ENCODE measurements at regions of chr1 and their contacts with region 1.

Region 1: DNA sequence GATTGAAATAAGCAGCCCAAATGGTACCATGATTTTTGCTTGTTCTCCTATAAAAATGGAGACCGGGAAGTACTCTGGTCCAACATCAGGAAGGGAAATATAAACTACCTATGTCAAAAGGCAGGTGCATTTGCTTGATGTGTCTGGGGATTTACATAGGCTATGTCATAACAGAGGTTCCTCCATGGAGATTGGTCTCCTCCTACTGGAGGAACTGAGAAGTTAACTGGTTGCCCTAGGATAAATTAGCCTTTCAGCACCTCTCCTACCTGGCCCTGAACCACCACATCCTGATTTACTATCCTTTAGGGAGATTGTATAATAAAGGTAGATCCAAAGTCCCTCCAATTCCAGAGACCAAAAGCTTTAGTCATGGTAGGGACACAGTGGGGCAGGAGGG is 1109.3 kb upstream of the B3GALT2 start:
- DNase-seq: peak; percentile 27
- ATAC-seq: peak; percentile 76
- H3K4me3 Mint-ChIP-seq: no peak overlapping the region
- H3K27ac Mint-ChIP-seq: peak overlapping the region; percentile 53
- H3K4me1 Mint-ChIP-seq: peaks cover 44% of the 10 kb centered on the region
- H3K27me3 Mint-ChIP-seq: no peaks in the 10 kb centered on the region

Region 2: GRCh38 chr1:192477630-192478029 is 1818.1 kb before region 1 on chr1:
- CTCF ChIA-PET with region 1: no interaction called
- POLR2A ChIA-PET with region 1: no interaction called
- intact Hi-C with region 1: loop called in 1 of 2 experiments (anchors 5 kb)
- DNase-seq: no peak
- ATAC-seq: peak; percentile 67
- H3K4me3 Mint-ChIP-seq: no peak overlapping the region
- H3K27ac Mint-ChIP-seq: no peak overlapping the region
- H3K4me1 Mint-ChIP-seq: peaks cover 2% of the 10 kb centered on the region
- H3K27me3 Mint-ChIP-seq: no peaks in the 10 kb centered on the region

Region 3: GRCh38 chr1:193059268-193060225 is 1236.1 kb before region 1 on chr1 and contains the starts of genes RO60 and UCHL5:
- CTCF ChIA-PET with region 1: no interaction called
- POLR2A ChIA-PET with region 1: no interaction called
- intact Hi-C with region 1: loop called in 1 of 2 experiments (anchors 5 kb)
- DNase-seq: peak; percentile 97
- ATAC-seq: peak; percentile 94
- H3K4me3 Mint-ChIP-seq: peak within 1 kb of the TSS; percentile 90
- H3K27ac Mint-ChIP-seq: peak within 1 kb of the TSS; percentile 99
- H3K4me1 Mint-ChIP-seq: peaks cover 50% of the 10 kb centered on the region
- H3K27me3 Mint-ChIP-seq: no peaks in the 10 kb centered on the region
- total RNA-seq, gene RO60: 45.4 to 57.3 TPM
- total RNA-seq, gene UCHL5: 94.5 to 141 TPM

Region 4: GRCh38 chr1:193183019-193183627 is 1112.6 kb before region 1 on chr1:
- CTCF ChIA-PET with region 1: interaction called, 3 read pairs
- POLR2A ChIA-PET with region 1: no interaction called
- intact Hi-C with region 1: loop called (anchors 1 to 2 kb)
- DNase-seq: no peak
- ATAC-seq: peak; percentile 47
- H3K4me3 Mint-ChIP-seq: no peak overlapping the region
- H3K27ac Mint-ChIP-seq: no peak overlapping the region
- H3K4me1 Mint-ChIP-seq: peaks cover 34% of the 10 kb centered on the region
- H3K27me3 Mint-ChIP-seq: no peaks in the 10 kb centered on the region

Region 5: DNA sequence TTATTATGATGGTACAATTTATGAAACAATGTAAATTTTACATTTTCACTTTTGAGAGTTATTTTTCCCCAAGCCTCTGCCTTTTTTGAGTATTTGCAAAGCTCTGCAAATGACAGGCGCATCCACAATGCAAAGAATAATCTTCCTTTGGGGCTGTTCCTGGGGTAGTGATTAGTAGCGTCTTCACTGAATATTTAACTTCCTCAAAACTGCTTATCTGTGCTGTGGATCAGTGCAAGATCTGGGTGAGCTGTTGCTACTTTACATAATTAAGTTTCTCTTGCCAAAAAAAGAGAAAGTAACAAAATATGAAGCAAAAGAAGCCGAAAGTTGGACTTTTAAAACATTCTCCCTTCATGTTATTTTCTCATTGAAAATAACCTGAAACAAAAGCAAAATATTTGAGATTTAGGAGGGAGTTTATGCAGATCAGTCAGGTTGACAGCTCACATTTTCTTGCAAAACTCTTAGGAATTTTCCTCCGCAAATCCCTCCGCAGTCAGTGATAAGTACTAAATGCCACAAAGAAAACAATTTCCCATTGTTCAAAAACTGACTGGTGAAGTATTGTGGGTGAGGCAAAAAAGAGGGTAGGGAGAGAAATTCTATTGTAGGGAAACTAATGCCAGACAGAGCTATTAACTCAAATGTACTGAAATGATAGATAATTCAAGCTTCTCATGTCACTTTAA is 832.9 kb before region 1 on chr1:
- CTCF ChIA-PET with region 1: no interaction called
- POLR2A ChIA-PET with region 1: no interaction called
- intact Hi-C with region 1: loop called in 1 of 2 experiments (anchors 5 kb)
- DNase-seq: no peak
- ATAC-seq: no peak
- H3K4me3 Mint-ChIP-seq: peak overlapping the region; percentile 51
- H3K27ac Mint-ChIP-seq: no peak overlapping the region
- H3K4me1 Mint-ChIP-seq: peaks cover 35% of the 10 kb centered on the region
- H3K27me3 Mint-ChIP-seq: no peaks in the 10 kb centered on the region

Region 6: GRCh38 chr1:193799948-193800690 is 495.6 kb before region 1 on chr1:
- CTCF ChIA-PET with region 1: no interaction called
- POLR2A ChIA-PET with region 1: no interaction called
- intact Hi-C with region 1: loop called in 1 of 2 experiments (anchors 10 kb)
- DNase-seq: peak; percentile 5
- ATAC-seq: peak; percentile 77
- H3K4me3 Mint-ChIP-seq: no peak overlapping the region
- H3K27ac Mint-ChIP-seq: no peak overlapping the region
- H3K4me1 Mint-ChIP-seq: peaks cover 11% of the 10 kb centered on the region
- H3K27me3 Mint-ChIP-seq: no peaks in the 10 kb centered on the region

Measured in activated CD4-positive, alpha-beta T cell treated with anti-CD3 and anti-CD28 coated beads for 36 hours (primary cell).